Naive thymus-derived CD4-positive, alpha-beta T cell (primary cell): ENCODE measurements at regions of chr3 and their contacts with region 1.

Region 1: GRCh38 chr3:4350789-4351163 is 47.6 kb downstream of the SETMAR start:
- DNase-seq: peak in 8 of 9 donors; percentile 46 to 75 (median 66)
- ATAC-seq: peak; percentile 95
- H3K4me3 ChIP-seq: no peak overlapping the region
- H3K4me3 Mint-ChIP-seq: peak overlapping the region; percentile 31 to 85 (median 68)
- H3K27ac ChIP-seq: no peak overlapping the region
- H3K27ac Mint-ChIP-seq: peak overlapping the region in 7 of 9 donors; percentile 1 to 42 (median 16)
- H3K4me1 ChIP-seq: peaks cover 0 to 5% of the 10 kb centered on the region in 2 donors
- H3K4me1 Mint-ChIP-seq: peaks cover 10 to 23% (median 18%) of the 10 kb centered on the region in 7 donors
- H3K27me3 ChIP-seq: no peaks in the 10 kb centered on the region
- H3K27me3 Mint-ChIP-seq: peaks cover 0 to 10% (median 0%) of the 10 kb centered on the region in 5 donors

Region 2: GRCh38 chr3:3499012-3499562 is 851.7 kb before region 1 on chr3:
- CTCF ChIA-PET with region 1: no interaction called
- POLR2A ChIA-PET with region 1: interaction called, 10 read pairs
- intact Hi-C with region 1: no loop called
- DNase-seq: no peak
- ATAC-seq: no peak
- H3K4me3 ChIP-seq: no peak overlapping the region
- H3K4me3 Mint-ChIP-seq: no peak overlapping the region
- H3K27ac ChIP-seq: no peak overlapping the region
- H3K27ac Mint-ChIP-seq: no peak overlapping the region
- H3K4me1 ChIP-seq: no peaks in the 10 kb centered on the region
- H3K4me1 Mint-ChIP-seq: no peaks in the 10 kb centered on the region
- H3K27me3 ChIP-seq: no peaks in the 10 kb centered on the region
- H3K27me3 Mint-ChIP-seq: peaks cover 0 to 5% (median 0%) of the 10 kb centered on the region in 5 donors

Region 3: DNA sequence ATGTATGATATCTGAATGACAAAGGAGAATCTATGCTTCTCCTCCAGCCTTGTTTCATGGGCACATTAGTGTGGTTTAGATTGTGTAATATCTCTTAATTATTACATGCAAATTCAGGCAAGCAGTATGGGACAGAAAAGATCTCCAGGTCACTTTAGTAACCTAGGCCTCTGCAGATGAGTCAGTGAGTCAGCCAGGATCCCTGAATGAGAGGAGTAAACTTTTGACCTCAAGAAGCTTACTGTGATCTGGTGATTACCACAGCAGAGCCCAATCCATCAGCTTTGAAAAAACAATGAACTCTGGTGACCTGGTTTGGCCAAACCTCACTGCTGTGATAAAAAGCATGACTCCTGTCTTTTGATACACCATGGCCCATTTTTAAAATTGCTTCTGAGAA is 443.8 kb before region 1 on chr3:
- CTCF ChIA-PET with region 1: no interaction called
- POLR2A ChIA-PET with region 1: no interaction called
- intact Hi-C with region 1: no loop called
- DNase-seq: no peak
- ATAC-seq: no peak
- H3K4me3 ChIP-seq: no peak overlapping the region
- H3K4me3 Mint-ChIP-seq: no peak overlapping the region
- H3K27ac ChIP-seq: no peak overlapping the region
- H3K27ac Mint-ChIP-seq: no peak overlapping the region
- H3K4me1 ChIP-seq: no peaks in the 10 kb centered on the region
- H3K4me1 Mint-ChIP-seq: no peaks in the 10 kb centered on the region
- H3K27me3 ChIP-seq: no peaks in the 10 kb centered on the region
- H3K27me3 Mint-ChIP-seq: no peaks in the 10 kb centered on the region

Region 4: DNA sequence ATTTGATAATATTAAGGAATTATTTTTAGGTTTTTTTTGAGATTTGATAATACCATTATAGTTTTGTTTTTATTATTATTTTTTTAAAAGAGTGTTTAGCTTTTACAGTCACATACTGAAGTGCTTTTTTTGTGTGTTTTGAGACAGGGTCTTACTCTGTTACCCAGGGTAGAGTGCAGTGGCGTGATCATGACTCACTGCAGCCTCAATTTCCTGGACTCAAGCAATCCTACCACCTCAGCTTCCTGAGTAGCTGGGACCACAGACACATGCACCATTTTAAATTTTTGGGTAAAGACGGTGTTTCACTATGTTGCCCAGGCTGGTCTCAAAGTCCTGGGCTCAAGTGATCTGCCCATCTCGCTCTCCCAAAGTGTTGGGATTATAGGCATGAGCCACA is 43.3 kb after region 1 on chr3:
- CTCF ChIA-PET with region 1: interaction called, 4 read pairs
- POLR2A ChIA-PET with region 1: no interaction called
- intact Hi-C with region 1: loop called in 1 of 2 experiments (anchors 2 kb)
- DNase-seq: peak in 1 of 9 donors; percentile 29
- ATAC-seq: peak; percentile 57
- H3K4me3 ChIP-seq: no peak overlapping the region
- H3K4me3 Mint-ChIP-seq: peak overlapping the region in 2 of 10 donors; percentile 13 to 45
- H3K27ac ChIP-seq: no peak overlapping the region
- H3K27ac Mint-ChIP-seq: peak overlapping the region in 1 of 9 donors; percentile 84
- H3K4me1 ChIP-seq: peaks cover 0 to 9% of the 10 kb centered on the region in 2 donors
- H3K4me1 Mint-ChIP-seq: peaks cover 0 to 43% (median 6%) of the 10 kb centered on the region in 7 donors
- H3K27me3 ChIP-seq: no peaks in the 10 kb centered on the region
- H3K27me3 Mint-ChIP-seq: no peaks in the 10 kb centered on the region

Region 5: DNA sequence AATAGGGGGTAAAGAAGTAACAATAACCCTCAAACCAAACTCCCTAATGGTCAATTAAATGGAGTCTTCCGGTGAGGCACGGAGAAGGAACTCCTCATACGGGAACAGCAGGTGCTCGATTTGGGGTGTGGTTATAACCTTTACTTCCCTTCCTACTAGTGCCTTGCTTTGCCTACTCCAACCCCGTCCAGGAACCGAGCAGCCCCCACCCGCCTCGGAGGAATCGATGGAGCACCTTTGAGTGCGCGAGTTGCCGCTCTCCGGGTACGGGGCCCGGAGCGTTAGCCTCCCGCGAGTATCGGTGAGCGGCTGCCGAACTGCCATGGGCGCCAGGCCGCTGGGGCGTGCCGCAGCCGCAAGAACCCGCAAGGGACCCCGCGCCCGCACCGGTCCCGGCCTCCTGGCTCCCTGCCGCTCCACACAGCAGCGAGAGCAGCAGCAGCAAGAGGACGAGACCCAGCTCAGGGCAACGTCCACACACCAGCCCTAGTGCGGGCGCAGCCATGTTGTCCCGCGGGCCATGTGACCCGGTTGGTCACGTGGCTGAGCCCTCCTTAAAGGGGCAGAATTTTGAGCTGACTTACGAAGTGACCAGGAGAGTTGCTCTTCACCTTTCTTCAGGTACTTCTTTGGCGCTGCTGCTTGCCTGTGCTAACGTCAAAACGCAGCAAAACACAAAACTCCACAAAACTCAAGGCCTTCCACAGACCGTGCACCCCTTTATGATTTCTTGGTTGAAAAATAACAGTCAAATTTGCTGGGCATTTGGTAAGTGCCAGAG is 116.2 kb after region 1 on chr3 and contains the start of gene SUMF1:
- CTCF ChIA-PET with region 1: no interaction called
- POLR2A ChIA-PET with region 1: interaction called, 4 read pairs
- intact Hi-C with region 1: loop called (anchors 1 to 2 kb)
- DNase-seq: peak; percentile 59 to 79 (median 70)
- ATAC-seq: peak; percentile 98
- H3K4me3 ChIP-seq: peak within 1 kb of the TSS; percentile 90
- H3K4me3 Mint-ChIP-seq: peak within 1 kb of the TSS; percentile 90 to 95 (median 92)
- H3K27ac ChIP-seq: peak within 1 kb of the TSS; percentile 77
- H3K27ac Mint-ChIP-seq: peak within 1 kb of the TSS; percentile 86 to 96 (median 94)
- H3K4me1 ChIP-seq: peaks cover 5 to 7% of the 10 kb centered on the region in 2 donors
- H3K4me1 Mint-ChIP-seq: peaks cover 12 to 38% (median 21%) of the 10 kb centered on the region in 7 donors
- H3K27me3 ChIP-seq: no peaks in the 10 kb centered on the region
- H3K27me3 Mint-ChIP-seq: peaks cover 0 to 2% (median under 1%) of the 10 kb centered on the region in 5 donors
- total RNA-seq, gene SUMF1: 9.2 to 20.0 (median 16.0) TPM

Region 6: DNA sequence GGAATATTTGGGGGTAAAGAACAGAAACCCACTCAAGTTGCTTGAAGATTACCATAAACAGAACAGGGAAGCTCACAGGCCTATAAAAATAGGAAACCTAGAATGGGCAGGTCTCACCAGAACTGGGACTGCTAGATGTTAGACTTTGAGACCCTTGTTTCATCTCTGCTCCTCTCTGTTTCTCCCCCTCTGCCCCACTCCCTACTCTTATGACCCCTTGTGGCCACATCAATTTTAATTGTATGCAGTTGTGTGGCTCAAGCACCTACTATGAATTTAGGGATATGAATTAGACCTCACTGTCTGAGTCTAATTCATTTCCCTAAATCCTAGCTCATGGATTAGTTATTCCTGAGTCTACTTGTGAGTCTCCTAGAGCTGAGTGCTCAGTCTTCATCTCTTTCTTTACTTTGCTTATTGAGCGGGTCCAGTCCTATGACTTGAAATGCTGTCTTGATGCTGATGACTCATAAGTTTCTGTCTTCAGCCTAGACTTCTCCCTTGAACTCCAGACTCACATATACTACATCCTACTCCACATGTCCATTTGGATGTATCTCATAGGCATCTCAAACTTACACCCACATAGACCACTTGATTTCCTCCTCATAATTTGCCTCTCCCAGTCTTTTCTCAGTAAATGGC is 221.0 kb after region 1 on chr3:
- CTCF ChIA-PET with region 1: no interaction called
- POLR2A ChIA-PET with region 1: no interaction called
- intact Hi-C with region 1: loop called (anchors 1 kb)
- DNase-seq: peak in 2 of 9 donors; percentile 12 to 18
- ATAC-seq: peak; percentile 49
- H3K4me3 ChIP-seq: no peak overlapping the region
- H3K4me3 Mint-ChIP-seq: no peak overlapping the region
- H3K27ac ChIP-seq: no peak overlapping the region
- H3K27ac Mint-ChIP-seq: peak overlapping the region in 2 of 9 donors; percentile 28 to 40
- H3K4me1 ChIP-seq: no peaks in the 10 kb centered on the region
- H3K4me1 Mint-ChIP-seq: peaks cover 6 to 59% (median 43%) of the 10 kb centered on the region in 7 donors
- H3K27me3 ChIP-seq: no peaks in the 10 kb centered on the region
- H3K27me3 Mint-ChIP-seq: no peaks in the 10 kb centered on the region

Region 7: GRCh38 chr3:4633078-4634004 is 282.6 kb after region 1 on chr3:
- CTCF ChIA-PET with region 1: interaction called, 79 read pairs
- POLR2A ChIA-PET with region 1: interaction called, 3 read pairs
- intact Hi-C with region 1: loop called (anchors 1 kb)
- DNase-seq: peak in 6 of 9 donors; percentile 24 to 57 (median 44)
- ATAC-seq: peak; percentile 80
- H3K4me3 ChIP-seq: no peak overlapping the region
- H3K4me3 Mint-ChIP-seq: no peak overlapping the region
- H3K27ac ChIP-seq: no peak overlapping the region
- H3K27ac Mint-ChIP-seq: peak overlapping the region in 5 of 9 donors; percentile 1 to 53 (median 43)
- H3K4me1 ChIP-seq: no peaks in the 10 kb centered on the region
- H3K4me1 Mint-ChIP-seq: peaks cover 6 to 9% (median 7%) of the 10 kb centered on the region in 7 donors
- H3K27me3 ChIP-seq: no peaks in the 10 kb centered on the region
- H3K27me3 Mint-ChIP-seq: no peaks in the 10 kb centered on the region

Region 8: GRCh38 chr3:5057857-5058324 is 707.1 kb after region 1 on chr3:
- CTCF ChIA-PET with region 1: interaction called, 3 read pairs
- POLR2A ChIA-PET with region 1: no interaction called
- intact Hi-C with region 1: loop called (anchors 1 kb)
- DNase-seq: peak; percentile 22 to 75 (median 64)
- ATAC-seq: peak; percentile 92
- H3K4me3 ChIP-seq: no peak overlapping the region
- H3K4me3 Mint-ChIP-seq: peak overlapping the region in 1 of 10 donors; percentile 25
- H3K27ac ChIP-seq: no peak overlapping the region
- H3K27ac Mint-ChIP-seq: no peak overlapping the region
- H3K4me1 ChIP-seq: no peaks in the 10 kb centered on the region
- H3K4me1 Mint-ChIP-seq: peaks cover 0 to 38% (median 0%) of the 10 kb centered on the region in 7 donors
- H3K27me3 ChIP-seq: no peaks in the 10 kb centered on the region
- H3K27me3 Mint-ChIP-seq: peaks cover 0 to 4% (median 0%) of the 10 kb centered on the region in 5 donors